Dorsolateral prefrontal cortex (tissue), 120 donors: ENCODE measurements at regions of chr19 and their contacts with region 1.

Region 1: GRCh38 chr19:1275260-1275975 is at the start of gene FAM174C:
- DNase-seq: peak; percentile 94 to 98 (median 97)
- H3K4me3 ChIP-seq: peak within 1 kb of the TSS; percentile 58 to 92 (median 78)
- H3K27ac ChIP-seq: peak within 1 kb of the TSS; percentile 85 to 100 (median 98)
- H3K27me3 ChIP-seq: no peaks in the 10 kb centered on the region
- CTCF ChIP-seq: peak in 13 of 56 donors; percentile 3 to 37 (median 13)
- total RNA-seq, gene FAM174C: 16.2 to 44.5 (median 25.3) TPM

Region 2: DNA sequence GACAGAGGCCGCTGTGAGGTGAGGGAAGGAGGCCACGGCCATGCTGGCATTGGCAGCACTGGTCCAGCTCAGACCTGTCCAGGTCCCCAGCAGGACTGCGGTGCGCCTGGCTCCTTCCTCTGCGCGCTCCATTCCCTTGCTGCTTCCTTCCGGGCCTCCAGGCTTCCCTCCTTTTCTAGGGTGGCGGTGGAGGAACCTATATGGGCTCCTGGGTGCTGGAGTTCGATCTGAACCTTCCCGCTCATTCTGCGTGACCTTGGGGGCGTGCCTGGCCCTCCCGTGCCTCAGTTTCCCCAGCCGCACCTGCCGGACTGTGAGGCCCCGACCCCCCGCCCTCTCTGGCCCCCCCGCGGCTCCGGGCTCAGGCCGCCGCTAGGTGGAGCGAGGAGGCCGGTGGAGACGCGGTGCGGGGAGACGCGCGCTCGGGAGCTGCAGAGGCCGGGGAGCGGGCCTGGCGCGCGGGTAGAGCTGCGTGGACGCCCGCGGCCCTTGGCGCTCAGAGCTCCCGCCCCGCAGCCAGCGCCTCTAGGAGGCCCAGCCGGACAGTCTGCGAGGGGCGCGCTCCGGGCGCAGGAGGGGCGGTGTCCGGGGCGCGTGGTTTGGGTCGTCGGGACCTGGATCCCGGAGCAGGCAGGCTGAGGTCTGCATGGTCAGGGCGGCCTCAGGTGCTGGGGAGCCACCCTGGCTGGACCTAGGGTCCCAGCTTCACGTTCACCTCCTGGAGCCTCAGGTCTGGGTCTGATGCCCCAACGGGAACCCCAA is 40.2 kb after region 1 on chr19:
- intact Hi-C with region 1: loop called in 1 of 2 experiments (anchors 5 kb)
- DNase-seq: peak; percentile 42 to 83 (median 68)
- H3K4me3 ChIP-seq: peak overlapping the region; percentile 8 to 62 (median 48)
- H3K27ac ChIP-seq: peak overlapping the region in 19 of 59 donors; percentile 2 to 78 (median 43)
- H3K27me3 ChIP-seq: no peaks in the 10 kb centered on the region
- CTCF ChIP-seq: peak; percentile 32 to 91 (median 77)

Region 3: DNA sequence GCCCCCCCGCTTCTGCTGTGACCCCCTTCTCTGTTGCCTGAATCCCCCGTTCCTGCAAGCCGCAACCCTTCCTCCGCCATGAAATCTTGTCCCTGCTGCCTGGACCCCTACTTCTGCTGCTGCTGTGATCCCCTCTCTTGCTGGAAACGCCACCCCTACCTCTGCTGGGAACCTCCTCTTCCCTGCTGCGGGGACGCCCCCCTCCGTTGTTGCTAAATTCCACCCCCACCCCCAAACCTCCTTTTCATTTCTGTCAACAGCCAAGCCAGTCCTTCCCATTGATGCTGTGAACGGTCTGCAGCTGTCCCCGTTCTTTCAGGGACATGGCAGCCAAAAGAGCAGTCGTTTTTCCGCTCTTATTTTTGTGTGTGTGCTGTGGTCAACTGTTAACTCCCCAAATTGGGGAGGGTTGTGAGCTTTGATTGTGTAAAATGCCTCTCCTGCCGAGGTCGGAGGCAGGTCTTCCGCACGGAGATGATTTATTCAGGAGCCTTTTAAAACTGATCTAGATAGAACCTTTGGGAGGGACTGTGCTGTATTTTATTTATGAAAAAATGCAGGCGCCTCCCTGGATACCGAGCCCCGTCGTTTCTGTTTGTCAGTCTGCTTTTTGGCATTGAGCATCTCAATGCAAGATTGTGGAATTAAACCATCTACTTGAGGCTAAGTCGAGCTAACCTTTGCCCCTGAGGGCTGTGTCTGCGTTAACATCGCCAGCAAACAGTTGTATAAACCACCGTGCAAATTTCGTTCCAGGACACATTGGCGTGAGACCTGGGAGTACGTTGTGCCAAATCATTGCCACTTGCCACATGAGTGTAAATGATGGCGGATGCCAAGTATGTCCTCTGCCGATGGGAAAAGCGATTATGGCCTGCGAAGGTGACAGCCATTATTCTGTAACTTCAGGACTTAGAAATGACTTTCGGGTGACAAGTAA is 80.4 kb after region 1 on chr19:
- intact Hi-C with region 1: loop called in 1 of 2 experiments (anchors 2 kb)
- DNase-seq: peak in 6 of 10 donors; percentile 41 to 71 (median 60)
- H3K4me3 ChIP-seq: peak overlapping the region; percentile 48 to 93 (median 80)
- H3K27ac ChIP-seq: peak overlapping the region; percentile 12 to 100 (median 98)
- H3K27me3 ChIP-seq: no peaks in the 10 kb centered on the region
- CTCF ChIP-seq: no peak

Region 4: DNA sequence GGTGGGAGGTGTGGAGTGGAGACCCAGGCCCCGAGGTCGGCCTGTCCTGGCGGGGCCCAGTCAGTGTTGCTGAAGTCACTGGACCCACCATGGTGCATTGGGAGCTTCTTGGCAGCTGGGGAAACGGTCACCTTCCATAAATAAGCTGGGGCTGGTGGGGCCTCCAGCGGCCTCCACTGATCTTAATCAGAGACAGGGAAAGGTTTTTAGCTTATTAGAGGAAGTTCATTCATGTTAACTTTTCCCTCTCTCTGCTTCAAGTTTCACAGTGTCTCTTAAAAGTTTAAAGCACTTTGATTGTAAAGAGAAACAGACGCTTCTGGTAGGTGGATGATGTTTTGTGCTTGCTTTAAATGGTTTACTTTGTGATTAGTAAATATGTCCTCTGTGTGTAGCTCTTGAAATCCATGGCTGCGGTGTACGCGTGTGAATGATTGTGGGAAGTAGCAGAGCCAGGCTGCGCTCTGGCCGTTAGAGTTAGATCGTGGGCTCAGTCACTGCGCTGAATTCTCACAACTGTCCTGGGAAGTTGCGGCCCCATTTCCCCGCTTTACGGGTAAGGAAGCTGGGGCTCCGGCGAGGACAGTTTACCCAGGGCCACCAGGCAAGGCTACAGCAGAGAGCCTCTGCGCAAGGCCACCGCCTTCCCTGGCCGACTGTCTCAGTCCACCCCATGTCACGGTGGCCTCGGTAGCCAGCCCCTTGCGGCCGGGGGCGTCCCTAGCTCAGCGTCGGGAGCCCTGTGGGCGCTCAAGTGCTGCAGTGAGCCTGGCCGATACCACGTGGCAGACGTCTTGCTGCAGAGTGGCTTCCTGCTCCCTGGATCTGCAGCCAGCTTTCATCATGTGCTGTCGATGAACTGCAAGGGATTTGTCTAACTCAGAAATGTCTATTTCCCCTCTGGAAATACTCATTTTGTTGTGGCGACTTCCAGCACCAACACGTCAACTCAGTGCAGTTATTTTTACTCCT is 91.8 kb after region 1 on chr19:
- intact Hi-C with region 1: loop called in 1 of 2 experiments (anchors 5 kb)
- DNase-seq: peak in 1 of 10 donors; percentile 47
- H3K4me3 ChIP-seq: no peak overlapping the region
- H3K27ac ChIP-seq: peak overlapping the region in 48 of 59 donors; percentile 7 to 87 (median 60)
- H3K27me3 ChIP-seq: no peaks in the 10 kb centered on the region
- CTCF ChIP-seq: no peak

Region 5: GRCh38 chr19:1401138-1401888 is 125.9 kb after region 1 on chr19 and contains the start of gene GAMT:
- intact Hi-C with region 1: loop called (anchors 5 to 10 kb)
- DNase-seq: peak in 3 of 10 donors; percentile 59 to 78 (median 60)
- H3K4me3 ChIP-seq: peak within 1 kb of the TSS; percentile 62 to 95 (median 84)
- H3K27ac ChIP-seq: peak within 1 kb of the TSS; percentile 22 to 97 (median 86)
- H3K27me3 ChIP-seq: no peaks in the 10 kb centered on the region
- CTCF ChIP-seq: peak in 55 of 56 donors; percentile 31 to 89 (median 68)
- total RNA-seq, gene GAMT: 30.0 to 91.1 (median 47.4) TPM

Region 6: GRCh38 chr19:1406774-1407499 is 131.5 kb after region 1 on chr19:
- intact Hi-C with region 1: loop called (anchors 5 to 10 kb)
- DNase-seq: peak; percentile 96 to 99 (median 98)
- H3K4me3 ChIP-seq: peak overlapping the region; percentile 42 to 99 (median 66)
- H3K27ac ChIP-seq: peak overlapping the region; percentile 51 to 96 (median 87)
- H3K27me3 ChIP-seq: no peaks in the 10 kb centered on the region
- CTCF ChIP-seq: peak in 53 of 56 donors; percentile 20 to 69 (median 50)